CD8-positive, alpha-beta T cell (primary cell): ENCODE measurements at regions of chr12 and their contacts with region 1.

Region 1: GRCh38 chr12:14505626-14506596 is 61.8 kb downstream of the PLBD1 start:
- DNase-seq: no peak
- ATAC-seq: no peak
- H3K4me3 ChIP-seq: no peak overlapping the region
- H3K4me3 Mint-ChIP-seq: no peak overlapping the region
- H3K27ac ChIP-seq: no peak overlapping the region
- H3K27ac Mint-ChIP-seq: peak overlapping the region; percentile 38
- H3K4me1 ChIP-seq: no peaks in the 10 kb centered on the region
- H3K4me1 Mint-ChIP-seq: peaks cover 2% of the 10 kb centered on the region
- H3K27me3 ChIP-seq: no peaks in the 10 kb centered on the region
- H3K27me3 Mint-ChIP-seq: no peaks in the 10 kb centered on the region
- CTCF ChIP-seq: no peak

Region 2: DNA sequence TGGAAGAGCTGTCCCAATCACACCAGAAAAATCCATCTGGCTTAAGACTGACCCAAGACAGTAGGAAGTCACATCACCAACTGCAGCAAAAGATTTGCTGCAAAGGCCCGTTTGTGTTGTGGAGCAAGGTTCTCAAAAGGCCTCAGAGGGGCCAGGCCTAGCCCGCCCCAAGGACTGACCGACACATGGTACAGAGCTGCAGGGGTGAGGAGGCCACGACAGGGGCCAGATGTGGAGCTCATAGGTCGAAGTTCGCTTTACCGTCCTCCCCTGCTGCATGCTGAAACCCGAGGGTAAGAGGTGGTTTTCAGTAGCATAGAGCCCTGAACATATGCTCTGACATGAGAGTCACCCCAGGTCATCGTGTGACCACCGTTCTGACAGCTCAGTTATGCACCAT is 26.2 kb after region 1 on chr12:
- CTCF ChIA-PET with region 1: no interaction called
- POLR2A ChIA-PET with region 1: no interaction called
- intact Hi-C with region 1: loop called in 1 of 2 experiments (anchors 1 kb)
- DNase-seq: no peak
- ATAC-seq: no peak
- H3K4me3 ChIP-seq: no peak overlapping the region
- H3K4me3 Mint-ChIP-seq: no peak overlapping the region
- H3K27ac ChIP-seq: no peak overlapping the region
- H3K27ac Mint-ChIP-seq: no peak overlapping the region
- H3K4me1 ChIP-seq: no peaks in the 10 kb centered on the region
- H3K4me1 Mint-ChIP-seq: no peaks in the 10 kb centered on the region
- H3K27me3 ChIP-seq: no peaks in the 10 kb centered on the region
- H3K27me3 Mint-ChIP-seq: no peaks in the 10 kb centered on the region
- CTCF ChIP-seq: no peak

Region 3: GRCh38 chr12:14845350-14845750 is 339.4 kb after region 1 on chr12:
- CTCF ChIA-PET with region 1: no interaction called
- POLR2A ChIA-PET with region 1: no interaction called
- intact Hi-C with region 1: no loop called
- DNase-seq: peak; percentile 7 to 73 (median 39)
- ATAC-seq: peak; percentile 71
- H3K4me3 ChIP-seq: no peak overlapping the region
- H3K4me3 Mint-ChIP-seq: no peak overlapping the region
- H3K27ac ChIP-seq: no peak overlapping the region
- H3K27ac Mint-ChIP-seq: no peak overlapping the region
- H3K4me1 ChIP-seq: peaks cover 9% of the 10 kb centered on the region
- H3K4me1 Mint-ChIP-seq: peaks cover 8% of the 10 kb centered on the region
- H3K27me3 ChIP-seq: no peaks in the 10 kb centered on the region
- H3K27me3 Mint-ChIP-seq: no peaks in the 10 kb centered on the region
- CTCF ChIP-seq: peak; percentile 88

Region 4: GRCh38 chr12:15011162-15011561 is 505.3 kb after region 1 on chr12:
- CTCF ChIA-PET with region 1: no interaction called
- POLR2A ChIA-PET with region 1: no interaction called
- intact Hi-C with region 1: no loop called
- DNase-seq: no peak
- ATAC-seq: no peak
- H3K4me3 ChIP-seq: no peak overlapping the region
- H3K4me3 Mint-ChIP-seq: no peak overlapping the region
- H3K27ac ChIP-seq: no peak overlapping the region
- H3K27ac Mint-ChIP-seq: no peak overlapping the region
- H3K4me1 ChIP-seq: no peaks in the 10 kb centered on the region
- H3K4me1 Mint-ChIP-seq: no peaks in the 10 kb centered on the region
- H3K27me3 ChIP-seq: peaks cover 0 to 4% of the 10 kb centered on the region in 2 experiments
- H3K27me3 Mint-ChIP-seq: peaks cover 15% of the 10 kb centered on the region
- CTCF ChIP-seq: no peak